Left ventricle myocardium inferior (tissue), 1 donor: ENCODE measurements at regions of chr10 and their contacts with region 1.

Region 1: DNA sequence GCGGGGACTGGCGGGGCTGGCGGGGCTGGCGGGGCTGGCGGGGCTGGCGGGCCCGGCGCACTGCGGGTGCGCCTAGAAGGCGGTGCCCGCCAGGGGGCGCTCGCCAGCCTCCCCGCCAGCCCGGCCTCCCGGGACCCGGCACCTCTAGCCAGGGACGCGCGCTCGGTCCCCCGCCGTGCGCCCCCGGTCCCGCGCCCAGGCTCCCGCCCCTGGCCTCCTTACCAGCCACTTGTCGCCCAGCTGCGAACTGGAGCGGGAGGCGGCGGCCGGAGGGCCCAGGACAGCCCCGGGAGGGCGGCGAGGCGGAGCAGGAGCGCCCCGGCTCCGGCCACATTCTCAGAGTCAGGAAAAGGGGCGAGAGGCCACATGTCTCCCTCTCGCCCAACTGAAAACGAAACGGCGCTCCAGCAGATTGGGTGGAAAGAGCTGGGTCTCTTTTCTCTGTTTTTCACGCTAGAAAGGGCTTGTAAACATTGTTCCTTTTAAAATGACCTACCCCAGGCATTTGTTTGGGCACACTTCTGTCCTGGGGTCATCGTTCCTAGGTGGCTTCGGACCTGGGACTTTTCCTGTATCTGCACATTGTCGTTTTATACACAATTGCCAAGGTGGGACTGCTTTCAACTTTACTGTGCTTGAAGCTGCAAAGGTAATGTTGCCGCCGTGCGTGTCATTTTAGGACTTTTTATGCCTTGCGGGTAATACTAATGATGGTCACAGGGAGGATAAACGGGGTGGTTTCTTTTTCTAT is 378 bp upstream of the PRKCQ start:
- DNase-seq: peak; percentile 62
- H3K4me3 ChIP-seq: peak overlapping the region; percentile 68
- H3K27ac ChIP-seq: no peak overlapping the region
- H3K4me1 ChIP-seq: peaks cover 10% of the 10 kb centered on the region
- H3K27me3 ChIP-seq: peaks cover 83% of the 10 kb centered on the region
- CTCF ChIP-seq: peak; percentile 69

Region 2: DNA sequence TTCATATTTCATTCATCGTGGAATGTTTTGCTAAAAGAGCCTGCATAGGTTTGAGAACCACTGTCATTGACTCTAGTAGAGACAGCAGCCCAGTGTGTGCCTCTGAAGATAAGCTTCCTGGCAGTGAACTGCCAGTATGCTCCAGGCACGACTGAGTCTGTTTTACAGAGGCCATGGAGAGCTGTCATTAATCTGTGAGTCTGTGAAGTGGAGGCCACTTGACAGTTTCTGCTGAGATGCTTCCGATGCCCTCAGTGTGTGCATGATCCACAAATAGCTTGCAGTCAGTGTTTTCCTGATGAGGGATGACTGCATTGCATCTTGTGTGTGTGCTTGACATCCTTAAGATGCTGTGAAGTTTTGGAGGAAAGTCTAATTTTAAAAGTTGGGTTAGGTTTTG is 215.6 kb before region 1 on chr10:
- intact Hi-C with region 1: no loop called
- DNase-seq: no peak
- H3K4me3 ChIP-seq: no peak overlapping the region
- H3K27ac ChIP-seq: no peak overlapping the region
- H3K4me1 ChIP-seq: peaks cover 12% of the 10 kb centered on the region
- H3K27me3 ChIP-seq: no peaks in the 10 kb centered on the region
- CTCF ChIP-seq: no peak

Region 3: GRCh38 chr10:6642876-6643275 is 62.4 kb after region 1 on chr10:
- intact Hi-C with region 1: no loop called
- DNase-seq: no peak
- H3K4me3 ChIP-seq: no peak overlapping the region
- H3K27ac ChIP-seq: no peak overlapping the region
- H3K4me1 ChIP-seq: no peaks in the 10 kb centered on the region
- H3K27me3 ChIP-seq: peaks cover 49% of the 10 kb centered on the region
- CTCF ChIP-seq: no peak

Region 4: GRCh38 chr10:6667679-6668270 is 87.3 kb after region 1 on chr10:
- intact Hi-C with region 1: loop called (anchors 5 kb)
- DNase-seq: no peak
- H3K4me3 ChIP-seq: no peak overlapping the region
- H3K27ac ChIP-seq: no peak overlapping the region
- H3K4me1 ChIP-seq: peaks cover 17% of the 10 kb centered on the region
- H3K27me3 ChIP-seq: peaks cover 37% of the 10 kb centered on the region
- CTCF ChIP-seq: peak; percentile 51

Region 5: GRCh38 chr10:6721480-6721879 is 141.0 kb after region 1 on chr10:
- intact Hi-C with region 1: no loop called
- DNase-seq: peak; percentile 41
- H3K4me3 ChIP-seq: no peak overlapping the region
- H3K27ac ChIP-seq: peak overlapping the region; percentile 70
- H3K4me1 ChIP-seq: peaks cover 14% of the 10 kb centered on the region
- H3K27me3 ChIP-seq: peaks cover 61% of the 10 kb centered on the region
- CTCF ChIP-seq: no peak

Region 6: GRCh38 chr10:7100032-7100702 is 519.7 kb after region 1 on chr10:
- intact Hi-C with region 1: no loop called
- DNase-seq: no peak
- H3K4me3 ChIP-seq: no peak overlapping the region
- H3K27ac ChIP-seq: no peak overlapping the region
- H3K4me1 ChIP-seq: no peaks in the 10 kb centered on the region
- H3K27me3 ChIP-seq: peaks cover 5% of the 10 kb centered on the region
- CTCF ChIP-seq: no peak